ENCODE measurements at regions of chr17 and their contacts with region 1.

Region 1: DNA sequence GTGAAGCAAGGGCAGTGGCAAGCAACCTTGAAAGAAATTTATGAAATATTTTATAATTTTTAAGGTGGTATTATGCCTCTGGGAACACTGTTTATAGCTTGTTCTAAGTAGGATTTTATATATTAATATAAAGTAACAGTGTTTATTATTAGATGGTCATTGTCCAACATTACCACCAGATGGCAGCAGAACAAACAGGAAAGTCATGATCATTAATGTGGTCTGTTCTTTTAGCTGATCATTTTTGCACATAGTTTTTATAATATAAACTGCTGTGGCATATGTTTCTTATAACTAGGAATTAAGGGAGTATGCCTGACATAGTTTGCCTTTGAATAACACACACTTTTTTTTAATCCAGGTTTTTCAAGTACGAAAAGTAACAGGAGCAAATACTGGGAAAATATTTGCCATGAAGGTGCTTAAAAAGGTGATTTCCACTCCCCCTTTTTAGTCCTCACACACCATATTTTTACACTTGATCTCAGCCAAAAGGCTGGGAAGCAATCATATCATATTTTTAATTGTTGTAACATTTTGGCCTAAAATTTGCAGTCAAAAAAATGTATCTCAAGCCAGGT is 21.4 kb downstream of the RPS6KB1 start:
- DNase-seq: no peak
- ATAC-seq: peak in 3 of 4 donors; percentile 48 to 75 (median 56)
- H3K4me3 ChIP-seq: no peak overlapping the region
- H3K27ac ChIP-seq: no peak overlapping the region
- H3K4me1 ChIP-seq: no peaks in the 10 kb centered on the region
- H3K27me3 ChIP-seq: no peaks in the 10 kb centered on the region
- CTCF ChIP-seq: peak; percentile 67

Region 2: DNA sequence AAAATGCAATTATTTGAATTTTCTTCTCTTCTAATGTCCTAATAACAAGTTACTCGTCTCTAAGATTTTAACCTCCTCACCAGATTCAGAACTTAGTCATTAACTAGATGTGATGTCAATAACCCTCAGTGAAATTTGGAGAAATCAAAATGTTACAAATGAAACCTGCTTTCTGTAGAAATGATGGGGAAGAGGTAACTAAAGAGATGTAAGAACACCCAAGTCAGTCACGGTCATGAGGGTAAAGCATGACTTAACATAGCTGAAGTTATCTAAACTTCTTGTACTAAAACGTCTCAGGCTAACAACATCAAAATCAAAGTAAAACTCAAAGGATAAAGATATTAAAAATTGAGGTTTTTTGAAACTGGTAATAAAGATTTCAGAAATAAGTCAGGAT is 40.5 kb after region 1 on chr17:
- intact Hi-C with region 1: loop called in 1 of 2 experiments (anchors 5 kb)
- DNase-seq: no peak
- ATAC-seq: no peak
- H3K4me3 ChIP-seq: no peak overlapping the region
- H3K27ac ChIP-seq: no peak overlapping the region
- H3K4me1 ChIP-seq: peaks cover 5% of the 10 kb centered on the region
- H3K27me3 ChIP-seq: no peaks in the 10 kb centered on the region
- CTCF ChIP-seq: no peak

Region 3: GRCh38 chr17:60036796-60037612 is 122.6 kb after region 1 on chr17:
- intact Hi-C with region 1: loop called (anchors 2 to 5 kb)
- DNase-seq: peak; percentile 61 to 73
- ATAC-seq: peak; percentile 83 to 90 (median 84)
- H3K4me3 ChIP-seq: no peak overlapping the region
- H3K27ac ChIP-seq: no peak overlapping the region
- H3K4me1 ChIP-seq: peaks cover 5% of the 10 kb centered on the region
- H3K27me3 ChIP-seq: no peaks in the 10 kb centered on the region
- CTCF ChIP-seq: peak; percentile 81

Region 4: GRCh38 chr17:60224064-60224463 is 309.7 kb after region 1 on chr17:
- intact Hi-C with region 1: no loop called
- DNase-seq: no peak
- ATAC-seq: no peak
- H3K4me3 ChIP-seq: no peak overlapping the region
- H3K27ac ChIP-seq: no peak overlapping the region
- H3K4me1 ChIP-seq: no peaks in the 10 kb centered on the region
- H3K27me3 ChIP-seq: no peaks in the 10 kb centered on the region
- CTCF ChIP-seq: no peak